RWPE1 (cell line): ENCODE measurements at regions of chr7 and their contacts with region 1.

Region 1: GRCh38 chr7:29105752-29106668 is 40.3 kb downstream of the CPVL start:
- DNase-seq: no peak
- H3K27ac ChIP-seq: no peak overlapping the region
- CTCF ChIP-seq: peak; percentile 95

Region 2: GRCh38 chr7:29078311-29079260 is 27.4 kb before region 1 on chr7:
- CTCF ChIA-PET with region 1: interaction called, 10 read pairs
- POLR2A ChIA-PET with region 1: no interaction called
- DNase-seq: no peak
- H3K27ac ChIP-seq: no peak overlapping the region
- CTCF ChIP-seq: no peak

Region 3: GRCh38 chr7:29119538-29120199 is 13.7 kb after region 1 on chr7:
- CTCF ChIA-PET with region 1: no interaction called
- POLR2A ChIA-PET with region 1: no interaction called
- DNase-seq: no peak
- H3K27ac ChIP-seq: no peak overlapping the region
- CTCF ChIP-seq: no peak